Endothelial cell of umbilical vein (primary cell): ENCODE measurements at regions of chr16 and their contacts with region 1.

Region 1: DNA sequence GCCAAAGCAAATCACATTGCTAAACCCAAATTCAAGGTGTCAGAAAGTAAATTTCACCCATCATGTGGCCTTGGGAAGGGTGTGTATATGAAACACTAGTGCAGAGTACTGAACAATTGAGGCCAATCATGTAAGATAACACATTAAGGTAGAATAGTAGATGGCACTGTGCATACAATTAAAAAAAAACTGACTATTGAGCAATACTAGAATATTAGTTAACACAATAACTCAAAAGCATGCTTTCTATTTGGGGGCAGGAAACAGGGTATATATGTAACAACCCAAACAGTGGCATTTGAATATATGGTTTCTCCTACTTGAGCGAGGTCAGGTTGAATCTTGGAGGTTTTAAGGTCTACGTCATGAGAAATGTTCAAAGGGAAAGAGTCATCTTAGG is 63.0 kb upstream of the DYNLRB2 start:
- DNase-seq: no peak
- H3K4me3 ChIP-seq: no peak overlapping the region
- H3K27ac ChIP-seq: no peak overlapping the region
- H3K4me1 ChIP-seq: no peaks in the 10 kb centered on the region
- H3K27me3 ChIP-seq: no peaks in the 10 kb centered on the region
- CTCF ChIP-seq: no peak
- POLR2A ChIP-seq: no peak

Region 2: GRCh38 chr16:80466024-80466987 is 11.5 kb before region 1 on chr16:
- CTCF ChIA-PET with region 1: interaction called, 35 read pairs
- POLR2A ChIA-PET with region 1: no interaction called
- dilution Hi-C with region 1: no loop called
- intact Hi-C with region 1: no loop called
- DNase-seq: peak; percentile 39
- H3K4me3 ChIP-seq: no peak overlapping the region
- H3K27ac ChIP-seq: no peak overlapping the region
- H3K4me1 ChIP-seq: no peaks in the 10 kb centered on the region
- H3K27me3 ChIP-seq: no peaks in the 10 kb centered on the region
- CTCF ChIP-seq: peak; percentile 78 to 84
- POLR2A ChIP-seq: no peak